Tibial artery (tissue), 4 donors: ENCODE measurements at regions of chr12 and their contacts with region 1.

Region 1: GRCh38 chr12:95473884-95474659 is at the start of gene METAP2:
- DNase-seq: peak; percentile 98
- H3K4me3 ChIP-seq: peak within 1 kb of the TSS; percentile 90 to 99
- H3K27ac ChIP-seq: peak within 1 kb of the TSS; percentile 97 to 98
- H3K4me1 ChIP-seq: peaks cover 0 to 44% (median 26%) of the 10 kb centered on the region in 4 donors
- H3K27me3 ChIP-seq: no peaks in the 10 kb centered on the region
- CTCF ChIP-seq: no peak

Region 2: GRCh38 chr12:95072900-95073697 is 401.0 kb before region 1 on chr12 and contains the start of gene NR2C1:
- intact Hi-C with region 1: loop called (anchors 10 kb)
- DNase-seq: peak; percentile 90 to 95
- H3K4me3 ChIP-seq: peak within 1 kb of the TSS; percentile 73 to 90
- H3K27ac ChIP-seq: peak within 1 kb of the TSS; percentile 79 to 89
- H3K4me1 ChIP-seq: peaks cover 0 to 10% (median 3%) of the 10 kb centered on the region in 4 donors
- H3K27me3 ChIP-seq: no peaks in the 10 kb centered on the region
- CTCF ChIP-seq: no peak

Region 3: GRCh38 chr12:95224202-95225170 is 249.6 kb before region 1 on chr12:
- intact Hi-C with region 1: loop called (anchors 5 kb)
- DNase-seq: no peak
- H3K4me3 ChIP-seq: no peak overlapping the region
- H3K27ac ChIP-seq: peak overlapping the region; percentile 40 to 46
- H3K4me1 ChIP-seq: peaks cover 0 to 86% (median 9%) of the 10 kb centered on the region in 4 donors
- H3K27me3 ChIP-seq: no peaks in the 10 kb centered on the region
- CTCF ChIP-seq: no peak

Region 4: GRCh38 chr12:95343461-95344230 is 130.4 kb before region 1 on chr12:
- intact Hi-C with region 1: loop called (anchors 10 kb)
- DNase-seq: no peak
- H3K4me3 ChIP-seq: no peak overlapping the region
- H3K27ac ChIP-seq: no peak overlapping the region
- H3K4me1 ChIP-seq: no peaks in the 10 kb centered on the region
- H3K27me3 ChIP-seq: no peaks in the 10 kb centered on the region
- CTCF ChIP-seq: no peak

Region 5: DNA sequence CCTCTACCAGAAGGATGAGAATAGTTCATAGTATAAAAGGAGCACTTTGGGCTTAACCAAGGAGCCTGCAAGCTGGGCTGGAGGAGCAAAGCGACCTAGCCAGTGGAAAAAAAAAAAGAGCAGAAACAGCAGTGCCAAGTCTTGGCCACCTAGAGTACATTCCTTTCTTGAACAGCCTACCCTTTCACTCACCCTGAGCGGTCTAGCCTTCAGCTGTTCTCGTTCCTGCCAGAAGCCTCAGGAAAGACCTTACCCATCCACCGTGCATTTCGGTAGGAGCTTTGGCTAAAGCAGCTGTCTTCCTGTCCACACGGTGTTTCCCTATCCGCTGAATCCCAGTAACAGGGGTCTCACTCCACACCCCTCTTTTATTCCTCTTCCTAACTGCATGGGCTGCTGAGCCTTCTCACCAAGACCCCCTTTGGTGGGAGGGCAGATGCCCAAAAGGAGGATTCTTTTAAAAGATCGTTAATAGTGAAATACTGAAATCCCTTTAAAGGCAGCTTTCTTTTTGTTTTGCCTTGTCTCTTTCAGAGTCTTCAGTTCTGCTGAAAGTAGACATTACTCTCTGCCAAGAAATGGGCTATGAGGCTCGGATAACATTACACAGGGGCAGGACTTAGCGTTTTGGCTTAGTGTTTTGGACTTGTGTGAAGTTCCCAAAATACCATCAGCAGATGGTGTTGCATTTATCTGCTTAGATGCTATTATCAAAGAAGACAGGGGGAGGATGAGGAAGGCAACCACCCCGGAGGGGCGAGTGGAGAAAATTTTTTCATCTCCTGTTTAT is 88.6 kb before region 1 on chr12:
- intact Hi-C with region 1: loop called (anchors 10 kb)
- DNase-seq: peak in 1 of 2 donors; percentile 69
- H3K4me3 ChIP-seq: peak overlapping the region; percentile 45 to 50
- H3K27ac ChIP-seq: peak overlapping the region; percentile 79 to 84
- H3K4me1 ChIP-seq: peaks cover 0 to 43% (median 16%) of the 10 kb centered on the region in 4 donors
- H3K27me3 ChIP-seq: no peaks in the 10 kb centered on the region
- CTCF ChIP-seq: peak in 1 of 2 experiments; percentile 15